ENCODE measurements at regions of chr3 and their contacts with region 1.

Region 1: GRCh38 chr3:179322286-179323196 is at the start of gene ZNF639:
- DNase-seq: peak; percentile 84
- ATAC-seq: peak; percentile 88
- H3K4me3 Mint-ChIP-seq: peak within 1 kb of the TSS; percentile 91
- H3K27ac Mint-ChIP-seq: peak within 1 kb of the TSS; percentile 91
- H3K4me1 Mint-ChIP-seq: peaks cover 28% of the 10 kb centered on the region
- H3K27me3 Mint-ChIP-seq: no peaks in the 10 kb centered on the region
- CTCF ChIP-seq: peak; percentile 82
- total RNA-seq, gene ZNF639: 32.3 to 34.8 TPM (median 33.4 TPM) in 3 replicates

Region 2: GRCh38 chr3:178385280-178385952 is 937.1 kb before region 1 on chr3:
- CTCF ChIA-PET with region 1: no interaction called
- POLR2A ChIA-PET with region 1: no interaction called
- DNase-seq: no peak
- ATAC-seq: peak; percentile 68
- H3K4me3 Mint-ChIP-seq: no peak overlapping the region
- H3K27ac Mint-ChIP-seq: no peak overlapping the region
- H3K4me1 Mint-ChIP-seq: peaks cover 30% of the 10 kb centered on the region
- H3K27me3 Mint-ChIP-seq: no peaks in the 10 kb centered on the region
- CTCF ChIP-seq: peak; percentile 44; the same call in 1 of the 2 replicates

Region 3: GRCh38 chr3:179015551-179016020 is 307.0 kb before region 1 on chr3:
- CTCF ChIA-PET with region 1: interaction called, 17 read pairs
- POLR2A ChIA-PET with region 1: no interaction called
- DNase-seq: peak; percentile 23
- ATAC-seq: peak; percentile 85
- H3K4me3 Mint-ChIP-seq: no peak overlapping the region
- H3K27ac Mint-ChIP-seq: no peak overlapping the region
- H3K4me1 Mint-ChIP-seq: no peaks in the 10 kb centered on the region
- H3K27me3 Mint-ChIP-seq: no peaks in the 10 kb centered on the region
- CTCF ChIP-seq: peak; percentile 72

Region 4: GRCh38 chr3:179562591-179563270 is 240.2 kb after region 1 on chr3 and contains the start of gene ACTL6A:
- CTCF ChIA-PET with region 1: interaction called, 10 read pairs
- POLR2A ChIA-PET with region 1: interaction called, 6 read pairs
- DNase-seq: peak; percentile 100
- ATAC-seq: peak; percentile 95
- H3K4me3 Mint-ChIP-seq: peak within 1 kb of the TSS; percentile 98
- H3K27ac Mint-ChIP-seq: peak within 1 kb of the TSS; percentile 99
- H3K4me1 Mint-ChIP-seq: peaks cover 17% of the 10 kb centered on the region
- H3K27me3 Mint-ChIP-seq: no peaks in the 10 kb centered on the region
- CTCF ChIP-seq: no peak
- total RNA-seq, gene ACTL6A: 71.6 to 82.9 TPM (median 74.6 TPM) in 3 replicates

Measured in WTC11 (cell line).